ENCODE measurements at regions of chr1 and their contacts with region 1.

Region 1: DNA sequence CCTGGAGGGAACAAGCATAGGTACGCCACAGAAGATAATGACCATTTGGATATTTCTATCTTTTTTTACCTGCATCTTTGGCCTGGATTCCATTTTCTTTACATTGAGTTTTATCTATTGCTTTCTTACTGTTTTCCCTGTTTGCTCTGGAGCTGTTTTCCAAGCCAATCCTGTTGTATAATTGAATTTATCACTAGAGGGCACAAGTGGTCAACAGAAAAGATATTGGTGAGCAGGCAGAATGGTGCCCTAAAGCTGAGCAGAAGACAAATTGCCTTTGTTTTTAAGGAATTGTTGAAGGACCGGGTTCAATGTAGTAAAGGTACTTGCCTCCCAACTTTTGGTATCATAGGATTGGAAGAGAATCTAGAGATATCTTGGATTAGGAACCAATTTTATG is 152.8 kb downstream of the PPP1R12B start:
- DNase-seq: no peak

Region 2: DNA sequence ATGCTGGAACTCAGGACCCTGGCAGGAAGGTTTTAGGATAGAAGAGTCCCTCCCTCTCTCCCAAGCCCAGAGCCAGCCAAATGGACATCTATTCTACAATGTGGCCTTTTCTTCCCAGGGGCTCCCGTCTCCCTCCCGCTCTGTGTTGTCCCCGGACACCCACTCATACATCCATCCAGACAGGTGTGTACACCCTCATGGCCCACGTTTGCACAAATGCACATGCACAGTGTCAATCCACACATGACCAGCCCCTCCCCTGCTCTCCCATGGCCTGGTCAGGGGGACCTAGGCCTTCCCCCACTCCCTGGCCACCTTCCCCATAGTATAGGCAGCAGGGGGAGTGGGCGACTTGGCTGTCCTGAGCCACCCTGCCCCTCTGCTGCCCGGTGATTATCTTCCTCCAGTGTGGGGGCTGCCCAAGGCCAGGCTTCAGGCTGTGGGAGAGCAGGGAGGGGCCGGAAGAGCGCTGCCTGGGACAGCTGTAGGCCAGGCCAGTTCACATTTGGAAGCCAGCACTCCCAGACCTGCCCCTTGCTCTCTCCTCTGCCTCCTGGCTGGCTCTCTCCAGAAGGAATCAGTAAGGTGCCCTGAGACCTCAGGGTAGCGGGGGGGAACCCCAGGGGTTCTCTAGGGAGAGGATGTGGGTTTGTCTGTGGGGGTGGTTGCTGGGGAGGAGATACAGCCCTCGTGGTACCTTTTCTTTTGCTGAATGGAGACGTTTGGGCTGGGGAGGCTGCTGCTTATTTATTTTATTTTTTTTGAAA is 336.8 kb before region 1 on chr1:
- intact Hi-C with region 1: no loop called
- DNase-seq: no peak

Region 3: GRCh38 chr1:202571347-202572339 is 70.4 kb after region 1 on chr1:
- intact Hi-C with region 1: loop called (anchors 1 kb)
- DNase-seq: peak in 3 of 10 donors; percentile 30 to 86 (median 43)

Measured in posterior cingulate gyrus (tissue), 11 donors.